ENCODE measurements at regions of chr7 and their contacts with region 1.

Region 1: GRCh38 chr7:873367-874002 is 2.9 kb upstream of the GET4 start:
- DNase-seq: peak; percentile 86 to 93 (median 91)
- ATAC-seq: peak; percentile 54
- H3K4me3 ChIP-seq: no peak overlapping the region
- H3K27ac ChIP-seq: peak overlapping the region; percentile 11 to 80 (median 43)
- H3K4me1 ChIP-seq: peaks cover 37% of the 10 kb centered on the region
- H3K27me3 ChIP-seq: no peaks in the 10 kb centered on the region
- CTCF ChIP-seq: peak; percentile 88 to 98 (median 96)
- POLR2A ChIP-seq: peak in 2 of 3 donors; percentile 39 to 40

Region 2: GRCh38 chr7:780081-780480 is 93.4 kb before region 1 on chr7:
- intact Hi-C with region 1: loop called (anchors 5 kb)
- DNase-seq: no peak
- ATAC-seq: no peak
- H3K4me3 ChIP-seq: no peak overlapping the region
- H3K27ac ChIP-seq: no peak overlapping the region
- H3K4me1 ChIP-seq: no peaks in the 10 kb centered on the region
- H3K27me3 ChIP-seq: no peaks in the 10 kb centered on the region
- CTCF ChIP-seq: no peak
- POLR2A ChIP-seq: no peak

Region 3: GRCh38 chr7:1555809-1556540 is 682.5 kb after region 1 on chr7 and contains the start of gene TMEM184A:
- intact Hi-C with region 1: no loop called
- DNase-seq: peak; percentile 95 to 99 (median 98)
- ATAC-seq: peak; percentile 89
- H3K4me3 ChIP-seq: peak within 1 kb of the TSS; percentile 17 to 27
- H3K27ac ChIP-seq: peak within 1 kb of the TSS; percentile 95 to 99 (median 98)
- H3K4me1 ChIP-seq: peaks cover 50% of the 10 kb centered on the region
- H3K27me3 ChIP-seq: no peaks in the 10 kb centered on the region
- CTCF ChIP-seq: peak; percentile 61 to 99 (median 97)
- POLR2A ChIP-seq: peak; percentile 92 to 93 (median 92)
- total RNA-seq, gene TMEM184A: 21.0 to 65.3 TPM